ENCODE measurements at regions of chr11 and their contacts with region 1.

Region 1: GRCh38 chr11:65314501-65315203 is at the start of gene CDC42EP2:
- DNase-seq: peak; percentile 86 to 93
- ATAC-seq: peak; percentile 87 to 97 (median 88)
- H3K4me3 ChIP-seq: peak within 1 kb of the TSS; percentile 83 to 100 (median 95)
- H3K27ac ChIP-seq: peak within 1 kb of the TSS; percentile 87 to 99 (median 96)
- H3K4me1 ChIP-seq: peaks cover 5 to 83% (median 62%) of the 10 kb centered on the region in 9 donors
- H3K27me3 ChIP-seq: peaks cover 0 to 10% (median 0%) of the 10 kb centered on the region in 7 donors
- CTCF ChIP-seq: peak in 1 of 9 donors; percentile 18
- total RNA-seq, gene CDC42EP2: 3.9 to 21.9 (median 9.0) TPM

Region 2: GRCh38 chr11:64846998-64847666 is 467.5 kb before region 1 on chr11:
- intact Hi-C with region 1: no loop called
- DNase-seq: peak; percentile 93 to 96
- ATAC-seq: peak; percentile 82 to 91 (median 88)
- H3K4me3 ChIP-seq: no peak overlapping the region
- H3K27ac ChIP-seq: peak overlapping the region in 7 of 10 donors; percentile 42 to 96 (median 94)
- H3K4me1 ChIP-seq: peaks cover 32 to 66% (median 57%) of the 10 kb centered on the region in 9 donors
- H3K27me3 ChIP-seq: no peaks in the 10 kb centered on the region
- CTCF ChIP-seq: peak; percentile 97 to 100 (median 98)

Region 3: GRCh38 chr11:65225279-65226102 is 89.2 kb before region 1 on chr11:
- intact Hi-C with region 1: loop called in 1 of 10 experiments (anchors 5 kb)
- DNase-seq: peak; percentile 59 to 65
- ATAC-seq: peak; percentile 64 to 88 (median 86)
- H3K4me3 ChIP-seq: peak overlapping the region; percentile 19 to 60 (median 52)
- H3K27ac ChIP-seq: peak overlapping the region in 7 of 10 donors; percentile 1 to 69 (median 50)
- H3K4me1 ChIP-seq: peaks cover 0 to 32% (median 6%) of the 10 kb centered on the region in 9 donors
- H3K27me3 ChIP-seq: peaks cover 0 to 5% (median 0%) of the 10 kb centered on the region in 7 donors
- CTCF ChIP-seq: peak; percentile 3 to 64 (median 53)

Region 4: GRCh38 chr11:65274735-65275682 is 39.6 kb before region 1 on chr11:
- intact Hi-C with region 1: loop called (anchors 1 to 2 kb)
- DNase-seq: peak; percentile 47 to 92
- ATAC-seq: peak; percentile 85 to 93 (median 90)
- H3K4me3 ChIP-seq: peak overlapping the region in 1 of 10 donors; percentile 33
- H3K27ac ChIP-seq: peak overlapping the region in 9 of 10 donors; percentile 11 to 74 (median 52)
- H3K4me1 ChIP-seq: peaks cover 0 to 34% (median 15%) of the 10 kb centered on the region in 9 donors
- H3K27me3 ChIP-seq: no peaks in the 10 kb centered on the region
- CTCF ChIP-seq: peak; percentile 63 to 93 (median 82)

Region 5: DNA sequence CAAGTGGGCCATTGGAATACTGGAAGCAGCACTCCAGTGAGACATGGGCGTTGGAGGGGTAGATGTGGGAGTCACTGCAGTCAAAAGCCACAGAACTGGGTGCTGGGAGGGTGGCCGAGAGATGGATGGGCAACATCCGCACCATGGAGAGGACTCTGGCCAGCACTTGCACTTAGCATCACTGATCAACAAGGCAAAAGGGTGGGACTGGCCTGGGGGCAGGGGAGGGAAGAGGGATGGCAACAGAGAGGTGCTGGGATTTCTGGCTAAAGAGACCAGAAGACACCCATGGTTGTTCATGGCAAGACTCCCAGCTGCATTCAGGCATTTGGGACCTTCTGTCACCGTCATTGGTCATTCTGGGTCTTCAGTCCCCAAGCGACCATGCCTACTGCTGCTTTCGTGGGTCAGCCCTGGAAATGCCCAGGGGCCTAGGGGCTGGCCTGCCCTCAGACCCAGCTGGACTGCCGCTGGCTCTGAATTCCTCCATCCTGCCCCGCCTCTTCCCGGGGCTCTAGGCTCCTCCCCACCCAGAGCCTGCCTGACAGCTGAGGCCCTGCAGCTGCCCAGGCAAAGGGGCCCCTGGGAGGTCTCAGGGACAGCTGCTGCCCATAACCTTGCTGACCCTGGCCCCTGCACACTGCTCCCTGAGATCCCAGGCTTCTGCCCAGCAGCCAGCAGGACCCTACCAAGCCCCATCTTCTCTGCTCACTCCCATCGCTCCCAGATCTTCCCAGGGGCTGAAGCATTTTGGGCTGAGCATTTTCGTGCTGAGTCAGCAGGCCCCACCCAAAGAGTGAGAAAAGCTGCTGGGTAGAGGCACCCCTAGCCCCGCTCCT is 12.9 kb before region 1 on chr11:
- intact Hi-C with region 1: loop called in 1 of 10 experiments (anchors 2 kb)
- DNase-seq: peak; percentile 56 to 82
- ATAC-seq: peak; percentile 31 to 62 (median 52)
- H3K4me3 ChIP-seq: no peak overlapping the region
- H3K27ac ChIP-seq: peak overlapping the region in 9 of 10 donors; percentile 2 to 63 (median 46)
- H3K4me1 ChIP-seq: peaks cover 16 to 50% (median 43%) of the 10 kb centered on the region in 9 donors
- H3K27me3 ChIP-seq: no peaks in the 10 kb centered on the region
- CTCF ChIP-seq: no peak

Region 6: DNA sequence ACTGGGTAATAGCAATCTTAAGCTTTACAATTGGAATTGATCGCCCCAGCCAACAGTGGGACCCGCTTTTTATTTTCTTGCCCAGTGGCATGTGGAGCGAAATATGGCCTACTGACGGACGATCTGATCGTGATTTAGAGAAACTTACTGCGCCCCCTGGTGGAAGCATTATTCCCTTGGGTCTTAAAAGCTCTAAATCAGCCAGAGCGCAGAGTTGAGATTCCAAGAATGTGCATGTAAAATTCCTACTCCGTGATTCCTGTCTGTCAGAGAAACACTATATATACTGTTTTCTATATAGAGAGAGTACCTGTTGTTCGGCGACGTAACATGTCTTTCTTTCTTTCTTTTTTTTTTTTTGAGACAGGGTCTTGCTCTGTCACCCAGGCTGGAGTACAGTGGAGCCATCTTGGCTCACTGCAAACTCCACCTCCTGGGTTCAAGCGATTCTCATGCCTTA is 15.3 kb after region 1 on chr11:
- intact Hi-C with region 1: loop called in 1 of 10 experiments (anchors 1 kb)
- DNase-seq: peak; percentile 37 to 91
- ATAC-seq: peak in 7 of 8 donors; percentile 15 to 45 (median 34)
- H3K4me3 ChIP-seq: peak overlapping the region in 1 of 10 donors; percentile 6
- H3K27ac ChIP-seq: peak overlapping the region in 5 of 10 donors; percentile 8 to 51 (median 20)
- H3K4me1 ChIP-seq: peaks cover 3 to 25% (median 17%) of the 10 kb centered on the region in 9 donors
- H3K27me3 ChIP-seq: no peaks in the 10 kb centered on the region
- CTCF ChIP-seq: peak; percentile 78 to 85 (median 84)

Measured in heart right ventricle (tissue), 16 donors.